PC-9 (cell line): ENCODE measurements at regions of chr16 and their contacts with region 1.

Region 1: DNA sequence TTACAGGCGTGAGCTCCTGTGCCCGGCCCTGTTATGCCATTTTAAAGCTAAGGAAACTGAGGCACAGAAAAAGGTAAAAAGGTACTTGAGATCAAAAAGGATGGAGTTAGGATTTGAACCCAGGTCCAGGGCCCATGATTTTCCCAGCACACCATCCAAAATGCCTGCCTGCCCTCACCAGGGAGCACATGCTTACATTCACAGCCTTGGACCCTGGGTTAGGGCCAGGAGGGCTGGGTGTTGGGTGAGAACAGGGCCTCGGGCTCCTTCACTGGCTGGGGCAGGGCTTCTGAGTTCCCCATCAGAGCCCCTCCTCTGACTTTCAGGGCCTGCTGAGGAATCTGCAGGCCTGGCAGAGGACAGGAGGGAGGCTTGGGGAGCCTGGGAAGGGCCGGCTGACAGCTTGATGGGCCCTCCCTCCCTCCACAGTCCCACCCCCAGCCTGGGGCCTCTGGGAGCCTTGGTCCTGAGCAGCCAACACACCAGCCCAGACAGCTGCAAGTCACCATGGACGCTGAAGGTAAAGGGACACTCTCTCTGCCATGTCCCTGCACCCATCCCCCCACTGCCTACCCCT is at the start of gene QPRT:
- DNase-seq: peak; percentile 78 to 88
- H3K4me3 ChIP-seq: peak within 1 kb of the TSS; percentile 75
- H3K27ac ChIP-seq: peak within 1 kb of the TSS; percentile 81
- H3K4me1 ChIP-seq: peaks cover 14% of the 10 kb centered on the region
- H3K27me3 ChIP-seq: no peaks in the 10 kb centered on the region
- CTCF ChIP-seq: no peak
- total RNA-seq, gene QPRT: 247 and 310 TPM in 2 replicates

Region 2: DNA sequence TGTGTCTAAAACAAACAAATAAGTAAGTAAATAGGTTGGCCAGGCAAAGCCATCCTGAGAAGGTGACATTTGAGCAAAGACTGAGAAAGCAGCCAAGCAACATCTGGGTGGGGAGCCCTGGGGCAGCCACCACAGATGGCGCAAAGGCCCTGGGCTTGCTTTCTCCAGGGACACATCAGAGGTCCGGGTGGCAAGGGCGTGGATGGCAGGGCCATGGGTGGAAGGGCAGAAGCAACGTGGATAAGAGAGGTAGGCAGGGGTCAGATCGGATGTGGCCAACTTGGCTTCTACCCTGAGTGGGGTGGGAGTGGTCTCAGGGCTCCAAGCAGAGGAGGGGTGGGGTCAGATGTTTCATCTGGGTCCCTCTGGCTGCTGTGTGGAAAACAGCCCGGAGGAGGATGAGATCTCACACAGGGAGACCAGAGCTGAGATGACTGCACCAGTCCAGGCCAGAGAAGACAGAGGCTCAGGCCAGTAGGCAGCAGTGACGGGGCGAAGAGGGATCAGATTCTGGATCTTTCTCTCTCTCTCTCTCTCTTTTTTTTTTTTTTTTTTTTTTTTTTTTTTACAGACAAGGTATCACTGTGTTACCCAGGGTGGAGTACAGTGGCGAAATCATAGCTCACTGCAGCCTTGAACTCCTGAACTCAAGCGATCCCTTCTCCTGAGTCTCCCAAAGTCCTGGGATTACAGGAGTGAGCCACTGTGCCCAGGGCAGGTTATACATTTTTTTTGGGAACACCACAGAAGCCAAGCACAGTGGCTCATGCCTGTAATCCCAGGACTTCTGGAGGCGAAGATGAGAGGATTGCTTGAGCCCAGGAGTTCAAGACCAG is 21.9 kb before region 1 on chr16:
- CTCF ChIA-PET with region 1: no interaction called
- POLR2A ChIA-PET with region 1: interaction called, 17 read pairs
- intact Hi-C with region 1: no loop called
- DNase-seq: no peak
- H3K4me3 ChIP-seq: no peak overlapping the region
- H3K27ac ChIP-seq: no peak overlapping the region
- H3K4me1 ChIP-seq: no peaks in the 10 kb centered on the region
- H3K27me3 ChIP-seq: no peaks in the 10 kb centered on the region
- CTCF ChIP-seq: no peak